Heart right ventricle (tissue), 16 donors: ENCODE measurements at regions of chr3 and their contacts with region 1.

Region 1: GRCh38 chr3:195697582-195698301 is 23.0 kb upstream of the MUC20 start:
- DNase-seq: no peak
- ATAC-seq: peak in 6 of 8 donors; percentile 6 to 68 (median 24)
- H3K4me3 ChIP-seq: no peak overlapping the region
- H3K27ac ChIP-seq: no peak overlapping the region
- H3K4me1 ChIP-seq: peaks cover 0 to 15% (median 0%) of the 10 kb centered on the region in 9 donors
- H3K27me3 ChIP-seq: no peaks in the 10 kb centered on the region
- CTCF ChIP-seq: no peak

Region 2: DNA sequence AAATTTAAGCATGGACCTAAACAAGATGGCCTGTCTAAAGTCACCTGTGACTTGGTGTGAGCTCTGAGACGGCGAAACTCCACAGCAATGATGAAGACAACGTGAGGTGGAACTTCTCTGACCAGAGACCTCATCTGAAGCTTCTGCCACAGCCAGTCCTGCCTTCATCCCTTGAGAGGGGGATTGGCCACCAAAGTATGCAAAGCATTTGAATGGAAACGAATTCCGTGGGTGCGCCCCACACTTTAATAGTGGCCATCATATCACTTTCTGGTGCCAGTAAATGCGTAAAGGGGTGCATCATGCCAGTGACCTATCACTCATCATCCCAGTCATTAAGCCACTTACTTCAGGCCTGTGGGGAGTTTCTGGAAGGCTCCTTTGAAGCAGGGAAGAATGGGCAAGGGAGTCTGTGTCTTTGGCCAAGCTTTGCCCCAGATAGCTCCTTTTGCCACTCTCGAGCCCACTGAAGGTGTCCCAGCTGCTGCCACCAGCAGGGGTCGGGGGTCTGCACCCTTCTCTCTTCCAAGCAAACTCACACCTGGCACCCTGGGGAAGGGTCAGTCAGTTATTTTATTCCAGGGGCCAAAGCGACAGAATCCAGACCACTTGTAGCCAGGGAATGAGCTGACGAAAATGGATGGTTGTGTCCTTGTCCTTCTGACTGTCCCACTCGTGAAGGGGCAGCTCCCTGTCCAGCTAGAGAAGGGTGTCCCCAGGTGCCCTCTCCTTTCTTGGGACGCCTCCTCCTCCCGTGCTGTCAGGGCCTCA is 40.7 kb after region 1 on chr3:
- intact Hi-C with region 1: loop called in 1 of 10 experiments (anchors 5 kb)
- DNase-seq: no peak
- ATAC-seq: no peak
- H3K4me3 ChIP-seq: no peak overlapping the region
- H3K27ac ChIP-seq: no peak overlapping the region
- H3K4me1 ChIP-seq: no peaks in the 10 kb centered on the region
- H3K27me3 ChIP-seq: peaks cover 0 to 24% (median 0%) of the 10 kb centered on the region in 7 donors
- CTCF ChIP-seq: no peak

Region 3: DNA sequence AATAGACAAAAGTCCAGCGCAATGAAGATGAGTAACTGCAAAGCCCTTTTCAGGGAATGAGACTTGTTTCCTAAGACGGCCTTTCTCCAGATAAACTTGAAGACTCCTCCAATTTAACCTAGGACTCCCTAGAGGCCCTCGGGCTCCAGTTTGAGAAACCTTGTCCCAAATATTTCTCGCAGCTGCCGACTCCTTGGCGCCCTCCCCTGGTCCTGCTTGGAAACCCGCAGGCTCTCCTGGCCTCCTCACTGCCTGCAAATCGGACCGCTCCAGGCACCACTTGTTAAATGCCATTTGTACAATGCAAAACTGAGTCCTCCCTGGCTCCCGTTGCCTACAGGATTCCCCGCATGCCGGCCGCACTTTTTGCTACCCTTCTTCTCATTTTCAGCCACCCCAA is 77.2 kb after region 1 on chr3:
- intact Hi-C with region 1: no loop called
- DNase-seq: peak; percentile 45 to 51
- ATAC-seq: peak in 4 of 8 donors; percentile 49 to 81 (median 60)
- H3K4me3 ChIP-seq: no peak overlapping the region
- H3K27ac ChIP-seq: no peak overlapping the region
- H3K4me1 ChIP-seq: no peaks in the 10 kb centered on the region
- H3K27me3 ChIP-seq: peaks cover 0 to 4% (median 0%) of the 10 kb centered on the region in 7 donors
- CTCF ChIP-seq: peak in 7 of 9 donors; percentile 43 to 58 (median 54)